ENCODE measurements at regions of chr2 and their contacts with region 1.

Region 1: GRCh38 chr2:38508311-38509039 is 94.3 kb downstream of the HNRNPLL start:
- DNase-seq: peak; percentile 78
- CTCF ChIP-seq: peak; percentile 80

Region 2: GRCh38 chr2:38095996-38096861 is 412.2 kb before region 1 on chr2:
- CTCF ChIA-PET with region 1: no interaction called
- POLR2A ChIA-PET with region 1: no interaction called
- DNase-seq: peak; percentile 45
- CTCF ChIP-seq: no peak

Region 3: DNA sequence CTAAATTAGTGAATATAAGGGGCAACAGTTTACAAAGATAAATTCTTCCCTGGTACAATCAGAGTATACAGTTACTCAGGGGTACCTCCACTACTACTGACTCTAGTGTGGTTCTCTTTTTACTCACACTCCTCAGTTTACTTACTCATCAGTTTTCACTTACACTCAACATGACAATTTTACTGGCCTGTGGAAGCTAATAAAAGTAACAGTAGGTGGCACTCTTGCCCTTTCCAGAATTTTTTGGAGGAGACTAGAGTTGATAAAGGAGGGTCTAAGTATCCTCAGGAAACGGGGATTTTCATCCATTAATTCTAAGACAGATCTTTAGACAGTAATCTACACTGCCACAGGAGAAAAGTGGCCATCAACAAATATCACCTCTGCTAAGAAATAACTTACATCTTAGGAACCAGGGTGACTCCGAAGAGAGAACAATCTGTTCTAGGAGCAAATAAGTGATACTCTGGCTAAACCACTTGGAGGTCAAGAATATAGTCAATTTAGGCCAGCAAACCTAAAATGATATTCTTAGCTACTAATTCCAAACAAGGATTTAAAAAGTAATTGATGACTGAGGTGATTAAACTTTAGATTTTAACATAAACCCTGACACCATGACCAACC is 192.7 kb before region 1 on chr2:
- CTCF ChIA-PET with region 1: interaction called, 119 read pairs
- POLR2A ChIA-PET with region 1: no interaction called
- DNase-seq: peak; percentile 47
- CTCF ChIP-seq: peak; percentile 60

Region 4: DNA sequence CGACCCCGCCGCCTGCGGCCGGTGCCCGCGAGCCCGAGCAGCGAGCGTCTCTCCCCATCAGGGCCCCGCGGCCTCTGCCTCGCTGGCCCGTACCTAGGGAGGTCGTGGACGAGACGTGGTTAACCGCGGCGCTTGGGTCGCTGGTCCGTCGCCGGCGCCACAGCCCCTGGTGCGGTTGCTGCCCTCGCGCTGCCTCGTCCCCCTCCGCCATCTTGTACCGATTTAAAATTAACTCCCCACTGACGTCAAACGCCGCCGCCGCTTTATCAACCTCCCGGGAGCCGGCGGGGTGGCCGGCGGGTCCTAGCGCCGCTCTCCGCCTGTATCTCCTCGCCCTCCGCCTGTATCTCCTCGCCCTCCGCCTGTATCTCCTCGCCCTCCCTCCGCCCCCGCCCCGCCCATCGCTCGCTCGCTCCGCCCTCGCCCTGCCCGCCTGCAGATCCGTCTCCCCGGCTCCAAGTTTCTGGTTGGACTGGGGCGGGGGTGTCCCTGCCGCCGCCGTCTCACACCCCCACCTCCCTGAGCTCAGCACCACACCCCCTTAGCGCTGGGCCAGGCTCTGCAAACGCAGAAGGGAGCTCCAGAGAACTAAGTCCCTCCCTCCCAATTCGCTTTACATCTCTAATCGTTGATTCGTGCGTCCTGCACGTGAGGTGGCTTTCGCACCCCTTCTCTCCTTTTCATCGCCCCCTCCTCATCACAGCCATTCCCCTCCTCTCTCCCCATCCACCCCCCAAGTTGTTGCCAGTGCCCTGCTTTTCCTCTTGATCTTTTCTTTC is 131.2 kb before region 1 on chr2 and contains the start of gene ATL2:
- CTCF ChIA-PET with region 1: interaction called, 13 read pairs
- POLR2A ChIA-PET with region 1: no interaction called
- DNase-seq: peak; percentile 92
- CTCF ChIP-seq: no peak

Region 5: DNA sequence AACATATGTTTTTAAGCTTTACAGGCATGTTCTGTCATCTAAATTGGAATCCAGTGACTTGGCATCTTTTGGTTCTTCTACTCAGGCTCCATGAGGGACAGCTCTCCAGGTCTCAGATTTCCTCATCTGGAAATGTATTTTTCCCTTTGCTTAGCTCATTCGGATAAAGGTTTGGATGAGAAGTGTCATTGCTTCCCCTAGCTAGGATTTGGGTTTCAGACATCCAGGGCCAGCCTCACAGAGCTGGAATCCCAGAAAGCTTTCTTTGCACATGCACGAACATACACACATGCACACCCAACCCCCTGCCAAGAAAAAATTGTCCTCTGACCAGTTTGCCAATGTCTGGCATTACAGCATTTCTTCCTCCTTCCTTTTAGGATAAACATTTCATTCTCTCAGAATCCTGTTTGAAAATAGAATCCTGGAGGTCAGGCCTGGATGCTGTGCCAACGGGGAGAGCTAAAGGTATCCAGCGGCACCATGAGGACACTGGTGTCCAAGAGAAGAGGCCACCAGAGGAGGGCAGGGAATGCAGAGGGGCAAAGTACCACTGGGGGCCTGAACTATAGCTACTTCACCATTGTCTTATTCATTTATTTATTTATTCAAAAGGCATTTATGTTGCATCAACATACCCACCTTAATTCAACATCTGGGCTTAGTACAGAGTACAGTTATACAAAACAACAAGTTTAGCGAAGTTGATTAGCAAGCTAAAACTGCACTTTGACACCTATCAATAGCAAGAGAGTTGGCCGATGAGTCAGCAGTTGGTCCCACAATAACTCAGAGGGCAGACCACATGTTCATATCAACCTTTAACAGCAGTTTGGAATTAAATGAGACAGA is 33.5 kb before region 1 on chr2:
- CTCF ChIA-PET with region 1: interaction called, 12 read pairs
- POLR2A ChIA-PET with region 1: no interaction called
- DNase-seq: no peak
- CTCF ChIP-seq: no peak

Region 6: GRCh38 chr2:38498045-38498481 is 10.4 kb before region 1 on chr2:
- CTCF ChIA-PET with region 1: interaction called, 32 read pairs
- POLR2A ChIA-PET with region 1: no interaction called
- DNase-seq: peak; percentile 54
- CTCF ChIP-seq: no peak

Region 7: DNA sequence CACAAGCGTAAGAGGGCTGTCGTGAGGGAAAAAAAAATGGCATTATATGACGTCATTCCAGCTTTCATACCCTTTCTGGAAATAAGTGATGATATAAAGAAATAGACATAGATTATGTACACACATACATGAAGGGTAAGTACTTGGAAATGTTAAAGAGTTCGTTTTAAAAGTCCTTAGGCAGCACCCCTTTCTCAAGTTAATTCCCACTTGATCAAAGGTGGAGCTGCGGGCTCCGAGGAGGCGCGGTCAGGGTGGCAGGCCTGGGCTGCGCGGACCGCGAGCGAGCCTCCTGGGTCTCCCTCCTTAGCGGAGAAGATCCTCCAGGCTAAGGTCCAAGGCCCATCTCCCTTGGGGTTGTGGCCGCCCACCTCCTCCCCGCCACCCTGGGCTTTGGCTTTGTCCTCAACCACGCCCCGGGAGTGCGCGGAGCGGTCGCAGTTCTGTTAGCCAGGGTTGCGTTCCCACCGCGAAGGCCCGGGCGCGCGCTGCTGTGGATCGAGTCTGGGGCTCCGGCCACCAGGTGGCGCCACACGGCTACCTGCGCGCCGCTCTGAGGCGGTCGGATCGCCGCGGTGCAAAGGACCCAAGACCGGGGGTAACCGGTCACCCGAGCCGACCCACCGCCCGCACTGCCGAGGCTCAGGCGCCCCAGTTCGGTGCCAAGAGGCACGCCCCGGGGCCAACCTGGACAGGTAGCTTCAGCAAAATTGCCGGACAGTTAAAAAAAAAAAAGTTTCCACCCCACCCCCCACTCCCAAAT is 27.4 kb after region 1 on chr2:
- CTCF ChIA-PET with region 1: interaction called, 10 read pairs
- POLR2A ChIA-PET with region 1: no interaction called
- DNase-seq: peak; percentile 85
- CTCF ChIP-seq: peak; percentile 88

Region 8: GRCh38 chr2:38648107-38648761 is 139.8 kb after region 1 on chr2:
- CTCF ChIA-PET with region 1: no interaction called
- POLR2A ChIA-PET with region 1: no interaction called
- DNase-seq: no peak
- CTCF ChIP-seq: no peak

Region 9: DNA sequence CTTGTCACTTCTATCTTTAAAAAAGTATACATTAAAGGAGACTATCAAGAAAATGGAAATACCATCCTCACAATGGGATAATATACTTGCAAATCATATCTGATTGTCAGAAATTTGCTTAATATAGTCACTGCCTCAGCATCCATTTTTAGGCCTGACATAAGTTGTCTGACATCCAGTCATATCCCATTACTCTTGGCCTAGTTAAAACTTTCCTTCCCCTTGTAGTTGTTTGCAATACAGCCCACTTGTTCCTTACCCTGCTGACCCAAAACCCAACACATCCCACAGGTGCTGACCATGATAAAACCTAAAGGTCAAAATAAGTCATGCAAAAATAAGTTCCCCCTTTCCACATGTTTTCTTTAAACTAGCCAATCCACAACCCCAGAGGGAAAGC is 377.6 kb after region 1 on chr2:
- CTCF ChIA-PET with region 1: no interaction called
- POLR2A ChIA-PET with region 1: no interaction called
- DNase-seq: no peak
- CTCF ChIP-seq: no peak

Measured in GM10248 (cell line).